A549 (cell line): ENCODE measurements at regions of chr22 and their contacts with region 1.

Region 1: DNA sequence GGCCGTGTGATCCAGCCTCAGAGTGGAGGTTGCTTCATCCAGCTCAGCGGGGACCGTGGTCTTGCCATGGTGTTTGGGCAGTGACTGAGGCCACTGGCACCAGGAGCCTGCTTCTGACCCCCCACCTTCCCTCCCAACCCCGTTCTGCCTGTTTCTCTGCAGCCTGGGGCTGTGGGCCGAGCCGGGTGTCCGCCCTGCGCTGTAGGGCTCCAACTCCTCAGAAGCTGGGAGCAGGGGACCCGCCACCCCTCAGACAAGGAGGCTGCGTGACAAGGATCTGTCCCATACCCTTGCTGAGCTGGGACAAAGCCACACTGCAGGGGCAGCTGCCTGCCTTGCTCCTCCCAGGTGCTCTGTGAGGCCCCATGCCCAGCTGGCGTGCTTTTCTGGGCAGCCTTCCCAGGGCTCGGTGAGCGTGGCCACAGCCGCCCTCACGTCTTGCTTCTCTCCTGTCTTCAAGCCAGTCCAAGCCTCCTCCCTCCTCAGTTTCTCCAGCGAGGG is 11.7 kb upstream of the ARFGAP3 start:
- DNase-seq: no peak
- ATAC-seq: no peak
- H3K4me3 ChIP-seq: no peak overlapping the region
- H3K27ac ChIP-seq: 0 out of 6 replicates have a peak overlapping the region, but pooled peaks of 1 of the 2 experiments have one; percentile 19
- H3K4me1 ChIP-seq: no peaks in the 10 kb centered on the region
- CTCF ChIP-seq: no peak
- EP300 ChIP-seq: no peak
- POLR2A ChIP-seq: no peak
- RAD21 ChIP-seq: no peak

Region 2: GRCh38 chr22:42662114-42663021 is 206.4 kb before region 1 on chr22:
- CTCF ChIA-PET with region 1: interaction called, 10 read pairs
- POLR2A ChIA-PET with region 1: no interaction called
- DNase-seq: peak; percentile 68 to 78
- ATAC-seq: peak; percentile 95
- H3K4me3 ChIP-seq: peak overlapping the region; percentile 71
- H3K27ac ChIP-seq: peak overlapping the region; percentile 89 to 90
- H3K4me1 ChIP-seq: no peaks in the 10 kb centered on the region
- CTCF ChIP-seq: peak; percentile 73
- EP300 ChIP-seq: no peak
- POLR2A ChIP-seq: no peak
- RAD21 ChIP-seq: peak; percentile 66 to 89

Region 3: DNA sequence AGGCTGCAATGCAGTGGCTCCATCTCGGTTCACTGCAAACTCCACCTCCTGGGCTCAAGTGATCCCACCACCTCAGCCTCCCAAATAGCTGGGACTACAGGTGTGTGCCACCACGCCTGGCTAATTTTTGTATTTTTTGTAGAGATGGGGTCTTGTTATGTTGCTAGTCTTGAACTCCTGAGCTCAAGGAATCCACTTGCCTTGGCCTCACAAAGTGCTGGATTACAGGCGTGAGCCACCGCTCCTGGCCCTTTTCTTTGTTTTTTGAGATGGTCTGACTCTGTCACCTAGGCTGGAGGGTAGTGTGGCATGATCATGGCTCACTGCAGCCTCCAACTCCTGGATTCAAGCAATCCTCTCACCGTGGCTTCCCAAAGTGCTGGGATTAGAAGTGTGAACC is 32.8 kb before region 1 on chr22:
- CTCF ChIA-PET with region 1: no interaction called
- POLR2A ChIA-PET with region 1: no interaction called
- DNase-seq: no peak
- ATAC-seq: no peak
- H3K4me3 ChIP-seq: no peak overlapping the region
- H3K27ac ChIP-seq: no peak overlapping the region
- H3K4me1 ChIP-seq: 0 out of 3 replicates have a peak, but pooled peaks cover 6% of the 10 kb centered on the region
- CTCF ChIP-seq: no peak
- EP300 ChIP-seq: no peak
- POLR2A ChIP-seq: no peak
- RAD21 ChIP-seq: no peak

Region 4: DNA sequence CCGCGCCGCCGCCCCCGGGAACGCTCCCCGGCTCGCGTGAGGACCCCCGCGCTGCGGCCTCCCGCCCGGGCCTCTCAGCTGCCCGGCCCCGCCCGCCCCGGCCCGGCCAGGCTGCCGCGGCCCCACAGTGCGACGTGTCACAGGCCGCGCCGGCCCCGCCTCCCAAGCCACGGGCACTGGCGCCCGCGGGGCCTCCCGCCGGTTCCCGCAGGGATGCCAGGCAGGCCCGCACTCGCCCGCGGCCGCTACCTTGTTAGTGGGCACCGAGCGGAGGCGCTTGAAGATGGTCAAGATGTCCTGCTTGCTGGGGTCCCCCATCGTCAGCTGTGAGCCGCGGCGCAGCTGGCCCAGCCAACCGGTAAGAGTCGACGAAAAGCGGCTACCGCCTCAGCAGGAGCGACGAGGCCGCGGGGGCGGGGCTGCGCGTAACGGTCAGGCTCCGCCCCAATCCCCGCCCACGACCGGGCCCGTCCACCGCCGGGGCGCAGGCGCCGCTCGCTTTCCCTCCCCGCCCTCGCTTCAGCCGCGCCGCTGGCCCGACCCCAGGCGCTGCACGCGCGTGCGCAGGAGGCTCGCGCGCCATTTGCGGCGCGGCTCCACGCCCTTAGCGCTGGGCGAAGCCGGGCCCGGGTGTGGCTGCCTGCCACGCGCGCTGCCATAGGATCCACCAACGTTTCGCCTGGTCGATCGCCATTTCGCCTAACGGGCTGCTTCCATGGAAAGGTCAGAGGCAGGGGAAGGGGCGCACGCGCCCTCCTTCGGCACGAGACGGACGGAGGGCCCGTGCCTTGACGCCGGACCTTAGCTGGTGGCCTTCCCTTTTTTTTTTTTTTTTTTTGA is 11.7 kb before region 1 on chr22 and contains the start of gene ARFGAP3:
- CTCF ChIA-PET with region 1: interaction called, 26 read pairs
- POLR2A ChIA-PET with region 1: interaction called, 3 read pairs
- DNase-seq: peak; percentile 72 to 90
- ATAC-seq: peak; percentile 92 to 94
- H3K4me3 ChIP-seq: peak within 1 kb of the TSS; percentile 91
- H3K27ac ChIP-seq: peak within 1 kb of the TSS; percentile 76 to 91
- H3K4me1 ChIP-seq: peaks cover 9% of the 10 kb centered on the region; the same call in 1 of the 3 replicates
- CTCF ChIP-seq: no peak
- EP300 ChIP-seq: no peak
- POLR2A ChIP-seq: peak; percentile 49; the same call in 1 of the 2 replicates
- RAD21 ChIP-seq: no peak
- polyA plus RNA-seq, gene ARFGAP3: 33.3 and 39.0 TPM in 2 replicates

Region 5: GRCh38 chr22:43100211-43100610 is 231.4 kb after region 1 on chr22:
- CTCF ChIA-PET with region 1: no interaction called
- POLR2A ChIA-PET with region 1: no interaction called
- DNase-seq: no peak
- ATAC-seq: no peak; a peak in 1 of 6 replicates
- H3K4me3 ChIP-seq: no peak overlapping the region
- H3K27ac ChIP-seq: no peak overlapping the region
- H3K4me1 ChIP-seq: no peaks in the 10 kb centered on the region
- CTCF ChIP-seq: no peak
- EP300 ChIP-seq: no peak
- POLR2A ChIP-seq: no peak
- RAD21 ChIP-seq: no peak